ENCODE measurements at regions of chr11 and their contacts with region 1.

Region 1: GRCh38 chr11:10792398-10792975 is 16.2 kb downstream of the EIF4G2 start:
- DNase-seq: peak; percentile 88 to 92 (median 90)
- ATAC-seq: peak; percentile 93
- H3K4me3 ChIP-seq: no peak overlapping the region
- H3K27ac ChIP-seq: no peak overlapping the region
- H3K4me1 ChIP-seq: peaks cover 8 to 9% of the 10 kb centered on the region in 2 experiments; a peak in 4 of 5 replicates
- H3K27me3 ChIP-seq: peaks cover 0 to 8% of the 10 kb centered on the region in 2 experiments; a peak in 2 of 5 replicates
- CTCF ChIP-seq: peak; percentile 97 to 98 (median 97)
- EP300 ChIP-seq: no peak
- POLR2A ChIP-seq: no peak
- RAD21 ChIP-seq: peak; percentile 95 to 98

Region 2: DNA sequence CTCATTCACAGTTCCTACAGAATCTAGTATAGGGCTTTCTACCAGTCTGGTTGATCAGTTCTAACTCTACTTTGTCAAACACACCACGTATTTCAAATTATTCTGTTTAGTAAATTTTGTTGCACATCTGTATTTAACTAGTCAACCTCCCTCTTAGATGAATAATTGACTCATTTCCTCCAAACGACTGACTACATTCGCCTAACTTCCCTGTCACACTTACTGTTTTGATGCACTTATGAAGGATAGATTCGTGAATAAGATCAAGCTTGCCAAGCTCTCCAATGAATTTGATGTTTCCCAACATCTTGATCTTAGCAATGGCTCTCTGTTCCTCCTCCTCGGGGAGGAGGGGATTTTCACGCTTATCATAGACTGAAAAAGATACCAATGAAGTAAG is 11.2 kb after region 1 on chr11:
- CTCF ChIA-PET with region 1: no interaction called
- POLR2A ChIA-PET with region 1: interaction called, 105 read pairs
- in situ Hi-C with region 1: no loop called
- intact Hi-C with region 1: no loop called
- DNase-seq: no peak
- ATAC-seq: no peak
- H3K4me3 ChIP-seq: no peak overlapping the region
- H3K27ac ChIP-seq: no peak overlapping the region
- H3K4me1 ChIP-seq: peaks cover 6 to 13% of the 10 kb centered on the region in 2 experiments; a peak in 3 of 5 replicates
- H3K27me3 ChIP-seq: no peaks in the 10 kb centered on the region
- CTCF ChIP-seq: no peak
- EP300 ChIP-seq: no peak
- POLR2A ChIP-seq: no peak
- RAD21 ChIP-seq: no peak

Region 3: DNA sequence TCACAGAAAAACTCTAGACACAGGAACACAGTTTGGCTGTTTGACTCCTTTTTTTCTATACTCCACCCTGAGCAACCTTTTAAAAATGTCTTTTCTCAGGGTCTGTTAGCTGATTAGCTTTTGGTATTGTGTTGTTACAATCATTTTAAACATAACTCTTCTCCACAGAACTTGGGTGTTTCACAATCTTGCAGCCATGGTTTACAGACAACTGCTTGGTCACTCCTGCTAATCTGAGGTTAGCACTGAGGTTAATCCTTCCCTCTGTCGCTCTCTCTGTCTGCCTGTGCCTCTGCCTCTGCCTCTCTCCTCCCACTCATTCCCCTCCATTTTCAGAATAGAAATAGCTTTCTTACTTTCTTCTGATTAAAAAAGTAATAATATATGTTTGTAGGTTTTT is 127.7 kb after region 1 on chr11:
- CTCF ChIA-PET with region 1: no interaction called
- POLR2A ChIA-PET with region 1: no interaction called
- in situ Hi-C with region 1: loop called (anchors 5 kb)
- intact Hi-C with region 1: no loop called
- DNase-seq: peak; percentile 52 to 91 (median 72)
- ATAC-seq: peak; percentile 99
- H3K4me3 ChIP-seq: no peak overlapping the region
- H3K27ac ChIP-seq: peak overlapping the region; percentile 93
- H3K4me1 ChIP-seq: peaks cover 0 to 20% of the 10 kb centered on the region in 2 experiments; a peak in 3 of 5 replicates
- H3K27me3 ChIP-seq: no peaks in the 10 kb centered on the region
- CTCF ChIP-seq: no peak
- EP300 ChIP-seq: peak; percentile 82; the same call in 1 of the 2 replicates
- POLR2A ChIP-seq: no peak; the same call in 1 of the 2 replicates
- RAD21 ChIP-seq: peak in 1 of 2 experiments; percentile 8; a peak in 1 of 4 replicates

Region 4: GRCh38 chr11:10933455-10934292 is 141.2 kb after region 1 on chr11:
- CTCF ChIA-PET with region 1: interaction called, 4 read pairs
- POLR2A ChIA-PET with region 1: interaction called, 3 read pairs
- in situ Hi-C with region 1: no loop called
- intact Hi-C with region 1: loop called (anchors 1 kb)
- DNase-seq: peak; percentile 81 to 93 (median 84)
- ATAC-seq: peak; percentile 97
- H3K4me3 ChIP-seq: peak overlapping the region; percentile 36
- H3K27ac ChIP-seq: peak overlapping the region; percentile 41; the same call in 2 of the 3 replicates
- H3K4me1 ChIP-seq: peaks cover 9 to 26% of the 10 kb centered on the region in 2 experiments; a peak in 4 of 5 replicates
- H3K27me3 ChIP-seq: no peaks in the 10 kb centered on the region
- CTCF ChIP-seq: peak; percentile 97 to 98 (median 98)
- EP300 ChIP-seq: no peak; the same call in 1 of the 2 replicates
- POLR2A ChIP-seq: 0 out of 2 replicates have a peak, but pooled peaks have one; percentile 45
- RAD21 ChIP-seq: peak; percentile 95 to 96

Region 5: DNA sequence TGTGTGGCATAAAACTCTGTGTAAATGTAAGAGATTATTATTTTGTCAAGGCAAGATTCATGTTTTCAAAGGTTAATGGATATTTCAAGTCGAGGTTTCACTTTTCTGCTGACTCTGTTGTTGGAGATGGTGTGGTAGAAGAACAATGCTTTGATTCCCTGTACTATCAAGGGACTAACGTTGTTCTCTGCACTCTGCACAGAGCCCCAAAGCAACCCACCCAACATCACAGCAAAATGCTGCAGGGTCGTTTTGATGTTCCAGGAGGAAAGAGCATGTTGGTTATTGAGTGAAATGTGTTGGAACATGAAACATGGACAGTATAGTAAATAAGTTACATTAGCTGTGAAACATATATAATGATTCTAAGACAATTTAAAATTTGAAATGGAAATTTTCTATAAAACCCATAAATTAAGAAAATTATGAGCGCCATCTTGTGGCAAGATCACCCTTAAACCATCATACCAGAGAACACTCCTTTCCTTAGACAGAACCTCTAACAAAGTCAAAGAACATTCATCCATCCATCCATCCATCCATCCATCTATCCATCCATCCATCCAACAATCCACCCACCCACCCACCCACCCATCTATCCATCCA is 229.7 kb after region 1 on chr11:
- CTCF ChIA-PET with region 1: interaction called, 24 read pairs
- POLR2A ChIA-PET with region 1: interaction called, 6 read pairs
- in situ Hi-C with region 1: loop called (anchors 5 kb)
- intact Hi-C with region 1: loop called (anchors 1 kb)
- DNase-seq: peak; percentile 33 to 49 (median 40)
- ATAC-seq: peak; percentile 63
- H3K4me3 ChIP-seq: no peak overlapping the region
- H3K27ac ChIP-seq: no peak overlapping the region
- H3K4me1 ChIP-seq: peaks cover 0 to 4% of the 10 kb centered on the region in 2 experiments; a peak in 2 of 5 replicates
- H3K27me3 ChIP-seq: no peaks in the 10 kb centered on the region
- CTCF ChIP-seq: peak; percentile 28 to 67 (median 36); a peak in 3 of 6 replicates
- EP300 ChIP-seq: no peak
- POLR2A ChIP-seq: no peak
- RAD21 ChIP-seq: peak; percentile 69 to 82

Region 6: GRCh38 chr11:11265994-11266606 is 473.6 kb after region 1 on chr11:
- CTCF ChIA-PET with region 1: no interaction called
- POLR2A ChIA-PET with region 1: no interaction called
- in situ Hi-C with region 1: loop called (anchors 25 kb)
- intact Hi-C with region 1: loop called (anchors 10 kb)
- DNase-seq: peak; percentile 64 to 90 (median 84)
- ATAC-seq: peak; percentile 98
- H3K4me3 ChIP-seq: no peak overlapping the region
- H3K27ac ChIP-seq: no peak overlapping the region
- H3K4me1 ChIP-seq: no peaks in the 10 kb centered on the region
- H3K27me3 ChIP-seq: no peaks in the 10 kb centered on the region
- CTCF ChIP-seq: peak; percentile 76 to 96 (median 81)
- EP300 ChIP-seq: no peak
- POLR2A ChIP-seq: no peak
- RAD21 ChIP-seq: peak; percentile 38 to 70